ENCODE measurements at regions of chr11 and their contacts with region 1.

Region 1: DNA sequence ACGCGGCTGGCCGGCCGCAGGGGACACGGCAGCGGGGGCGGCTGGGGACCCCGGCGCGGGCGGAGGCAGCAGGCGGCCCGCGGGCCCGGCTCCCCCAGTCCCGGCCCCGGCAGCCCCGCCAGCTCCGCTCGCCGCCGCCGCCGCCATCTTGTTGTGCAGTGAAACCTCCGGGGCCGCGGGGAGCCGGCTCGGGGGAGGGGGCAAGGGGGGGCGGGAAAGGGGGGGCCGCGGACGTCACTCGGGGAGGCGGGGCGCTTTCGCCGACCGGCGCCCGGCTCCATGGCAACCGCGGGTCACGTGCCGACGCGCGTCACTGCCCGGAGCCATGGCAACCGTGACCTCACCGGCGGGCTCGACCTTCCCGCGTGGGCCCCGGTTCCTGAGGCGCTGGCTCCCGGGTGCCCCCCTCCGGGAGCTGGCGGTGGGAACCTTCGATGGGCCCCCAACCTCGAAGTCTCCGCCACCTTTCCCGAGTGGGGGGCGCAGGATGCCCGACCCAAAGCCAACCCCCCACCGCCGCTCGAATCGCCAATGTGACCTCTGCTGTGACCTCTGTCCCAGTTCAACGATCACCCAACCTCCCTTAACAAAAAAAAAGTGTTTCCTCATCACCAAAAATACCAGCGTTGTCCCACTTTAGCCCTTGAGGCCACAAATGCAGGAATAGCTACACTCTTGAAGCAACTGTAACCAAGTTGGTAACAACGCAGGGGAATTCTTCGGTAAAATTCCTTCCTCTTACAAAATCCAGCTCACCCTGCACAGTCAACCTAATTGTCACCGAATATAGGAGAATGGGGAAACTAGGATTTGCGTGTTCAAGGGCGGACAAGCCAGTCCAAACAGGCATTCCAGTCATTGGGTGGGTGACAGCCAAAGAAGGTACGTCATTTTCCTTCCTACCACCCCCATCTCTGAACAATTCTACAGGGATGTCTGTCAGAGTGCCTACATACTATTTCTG is at the start of gene SIK3:
- DNase-seq: peak; percentile 92 to 95 (median 94)
- H3K4me3 ChIP-seq: peak within 1 kb of the TSS; percentile 79 to 86
- H3K4me3 Mint-ChIP-seq: peak within 1 kb of the TSS; percentile 95 to 100 (median 97)
- H3K27ac ChIP-seq: peak within 1 kb of the TSS; percentile 98
- H3K27ac Mint-ChIP-seq: peak within 1 kb of the TSS; percentile 99 to 100 (median 99)
- H3K4me1 ChIP-seq: peaks cover 47% of the 10 kb centered on the region
- H3K4me1 Mint-ChIP-seq: peaks cover 34 to 66% (median 46%) of the 10 kb centered on the region in 4 donors
- H3K27me3 ChIP-seq: no peaks in the 10 kb centered on the region
- H3K27me3 Mint-ChIP-seq: peaks cover 0 to 2% of the 10 kb centered on the region in 2 donors
- total RNA-seq, gene SIK3: 88.4 to 97.5 TPM

Region 2: DNA sequence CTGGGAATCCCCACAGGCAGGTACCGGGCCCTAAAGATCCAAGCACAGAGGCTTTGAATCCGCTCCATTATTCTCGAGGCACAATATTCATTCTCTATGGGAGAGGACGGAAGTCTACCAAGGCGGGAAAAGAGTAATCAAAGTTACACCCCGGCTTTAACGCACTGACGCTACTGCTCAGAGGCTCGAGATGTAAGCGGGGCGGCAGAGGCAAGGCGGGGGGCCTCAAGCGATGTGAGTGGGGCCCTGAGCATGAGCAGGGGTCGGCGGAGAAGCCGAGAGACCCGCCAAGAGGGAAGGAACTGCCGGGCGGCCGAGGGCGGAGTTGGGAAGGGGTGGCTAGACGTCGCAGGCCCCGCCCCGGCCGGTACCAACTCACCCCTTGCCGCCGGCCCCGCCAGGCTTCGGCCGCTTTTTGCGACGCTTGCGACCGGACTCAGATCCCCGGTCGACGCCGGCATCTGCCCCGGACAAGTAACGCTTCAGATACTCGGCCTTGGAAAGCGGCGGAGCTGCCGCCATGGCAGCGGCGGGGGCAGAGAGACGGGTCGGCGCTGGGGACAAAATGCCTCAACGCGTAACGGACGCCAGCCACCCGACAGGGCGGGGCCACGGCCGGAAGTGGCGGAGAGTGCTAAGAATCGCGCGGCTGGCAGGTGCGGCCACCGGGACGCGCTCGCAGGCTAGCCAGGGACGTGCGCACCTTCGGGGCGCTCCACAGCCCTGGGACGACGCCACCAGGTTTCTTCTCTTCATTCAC is 325.9 kb before region 1 on chr11 and contains the start of gene BUD13:
- CTCF ChIA-PET with region 1: interaction called, 3 read pairs
- POLR2A ChIA-PET with region 1: interaction called, 6 read pairs
- intact Hi-C with region 1: loop called (anchors 5 kb)
- DNase-seq: peak; percentile 92 to 96 (median 93)
- H3K4me3 ChIP-seq: peak within 1 kb of the TSS; percentile 71 to 93
- H3K4me3 Mint-ChIP-seq: peak within 1 kb of the TSS; percentile 97 to 100 (median 98)
- H3K27ac ChIP-seq: peak within 1 kb of the TSS; percentile 94
- H3K27ac Mint-ChIP-seq: peak within 1 kb of the TSS; percentile 94 to 99 (median 98)
- H3K4me1 ChIP-seq: peaks cover 24% of the 10 kb centered on the region
- H3K4me1 Mint-ChIP-seq: peaks cover 24 to 47% (median 35%) of the 10 kb centered on the region in 4 donors
- H3K27me3 ChIP-seq: no peaks in the 10 kb centered on the region
- H3K27me3 Mint-ChIP-seq: no peaks in the 10 kb centered on the region
- total RNA-seq, gene BUD13: 19.9 to 23.1 TPM

Region 3: GRCh38 chr11:116835791-116836631 is 262.5 kb before region 1 on chr11:
- CTCF ChIA-PET with region 1: interaction called, 13 read pairs
- POLR2A ChIA-PET with region 1: interaction called, 4 read pairs
- intact Hi-C with region 1: loop called (anchors 1 kb)
- DNase-seq: peak; percentile 78 to 82 (median 80)
- H3K4me3 ChIP-seq: peak overlapping the region; percentile 36 to 60
- H3K4me3 Mint-ChIP-seq: peak overlapping the region; percentile 67 to 87 (median 78)
- H3K27ac ChIP-seq: no peak overlapping the region
- H3K27ac Mint-ChIP-seq: peak overlapping the region in 6 of 7 donors; percentile 29 to 76 (median 64)
- H3K4me1 ChIP-seq: peaks cover 15% of the 10 kb centered on the region
- H3K4me1 Mint-ChIP-seq: peaks cover 4 to 21% (median 9%) of the 10 kb centered on the region in 4 donors
- H3K27me3 ChIP-seq: no peaks in the 10 kb centered on the region
- H3K27me3 Mint-ChIP-seq: no peaks in the 10 kb centered on the region

Region 4: DNA sequence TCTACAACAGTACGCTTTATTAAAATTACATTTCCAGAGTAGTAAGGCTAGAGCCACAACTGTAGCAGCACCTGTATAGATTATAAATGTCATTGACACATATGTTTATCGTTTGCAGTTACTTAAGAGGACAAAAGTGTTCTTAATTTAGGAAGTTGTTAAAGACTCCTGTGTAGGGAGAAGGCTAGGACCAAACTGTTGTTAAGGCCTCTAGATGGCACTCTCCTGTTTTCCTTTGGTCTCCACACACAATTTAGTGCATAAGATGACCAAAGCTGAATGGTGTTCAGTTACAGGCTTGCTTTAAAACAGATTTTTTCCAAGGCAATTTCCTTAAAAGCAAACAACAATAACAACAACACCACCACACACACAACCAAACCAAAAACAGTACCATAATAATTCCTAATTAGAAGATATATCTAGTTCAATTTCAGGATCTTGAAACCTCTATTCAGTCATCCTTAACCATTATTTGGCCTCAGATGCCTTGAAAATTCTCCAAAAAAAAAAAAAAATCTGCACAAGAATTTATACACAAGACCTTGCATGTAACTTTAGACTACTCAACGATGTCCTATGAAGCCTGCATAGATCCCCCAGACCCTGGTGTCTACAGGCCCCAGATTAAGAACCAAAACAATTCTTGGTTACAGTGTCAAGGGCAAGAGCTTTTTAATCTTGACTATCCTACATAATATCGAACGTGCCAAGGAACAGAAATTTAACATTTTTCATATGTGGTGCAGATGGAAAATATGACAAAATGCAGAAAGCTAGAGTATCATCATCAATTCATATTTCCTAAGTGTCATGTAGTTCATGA is 218.5 kb before region 1 on chr11:
- CTCF ChIA-PET with region 1: interaction called, 155 read pairs
- POLR2A ChIA-PET with region 1: interaction called, 16 read pairs
- intact Hi-C with region 1: no loop called
- DNase-seq: peak; percentile 39 to 56 (median 50)
- H3K4me3 ChIP-seq: no peak overlapping the region
- H3K4me3 Mint-ChIP-seq: no peak overlapping the region
- H3K27ac ChIP-seq: no peak overlapping the region
- H3K27ac Mint-ChIP-seq: peak overlapping the region; percentile 35 to 79 (median 64)
- H3K4me1 ChIP-seq: no peaks in the 10 kb centered on the region
- H3K4me1 Mint-ChIP-seq: peaks cover 10 to 12% (median 11%) of the 10 kb centered on the region in 4 donors
- H3K27me3 ChIP-seq: no peaks in the 10 kb centered on the region
- H3K27me3 Mint-ChIP-seq: no peaks in the 10 kb centered on the region

Region 5: DNA sequence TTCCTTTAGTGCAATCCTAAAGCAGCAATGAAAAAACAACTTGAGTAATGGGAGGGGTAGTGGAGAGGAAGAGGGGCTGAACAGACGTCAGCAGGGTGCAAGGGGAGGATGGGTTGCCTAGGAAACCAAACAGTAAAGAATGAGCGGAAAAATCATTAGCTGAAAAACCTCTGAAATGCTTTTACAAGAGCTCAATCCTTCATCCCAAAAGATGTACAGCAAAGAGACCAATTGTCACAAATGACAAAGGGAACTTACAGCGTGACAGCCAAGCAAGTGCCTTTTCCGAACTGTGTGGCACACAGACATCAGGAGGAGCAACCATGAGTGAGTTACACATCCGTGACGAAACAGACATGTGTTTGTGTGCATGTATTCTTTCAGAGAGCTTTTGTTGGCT is 105.0 kb before region 1 on chr11:
- CTCF ChIA-PET with region 1: interaction called, 3 read pairs
- POLR2A ChIA-PET with region 1: no interaction called
- intact Hi-C with region 1: loop called (anchors 5 kb)
- DNase-seq: peak; percentile 40 to 74 (median 54)
- H3K4me3 ChIP-seq: no peak overlapping the region
- H3K4me3 Mint-ChIP-seq: peak overlapping the region in 7 of 8 donors; percentile 17 to 83 (median 52)
- H3K27ac ChIP-seq: no peak overlapping the region
- H3K27ac Mint-ChIP-seq: peak overlapping the region; percentile 87 to 96 (median 95)
- H3K4me1 ChIP-seq: peaks cover 47% of the 10 kb centered on the region
- H3K4me1 Mint-ChIP-seq: peaks cover 48 to 81% (median 64%) of the 10 kb centered on the region in 4 donors
- H3K27me3 ChIP-seq: no peaks in the 10 kb centered on the region
- H3K27me3 Mint-ChIP-seq: no peaks in the 10 kb centered on the region

Region 6: DNA sequence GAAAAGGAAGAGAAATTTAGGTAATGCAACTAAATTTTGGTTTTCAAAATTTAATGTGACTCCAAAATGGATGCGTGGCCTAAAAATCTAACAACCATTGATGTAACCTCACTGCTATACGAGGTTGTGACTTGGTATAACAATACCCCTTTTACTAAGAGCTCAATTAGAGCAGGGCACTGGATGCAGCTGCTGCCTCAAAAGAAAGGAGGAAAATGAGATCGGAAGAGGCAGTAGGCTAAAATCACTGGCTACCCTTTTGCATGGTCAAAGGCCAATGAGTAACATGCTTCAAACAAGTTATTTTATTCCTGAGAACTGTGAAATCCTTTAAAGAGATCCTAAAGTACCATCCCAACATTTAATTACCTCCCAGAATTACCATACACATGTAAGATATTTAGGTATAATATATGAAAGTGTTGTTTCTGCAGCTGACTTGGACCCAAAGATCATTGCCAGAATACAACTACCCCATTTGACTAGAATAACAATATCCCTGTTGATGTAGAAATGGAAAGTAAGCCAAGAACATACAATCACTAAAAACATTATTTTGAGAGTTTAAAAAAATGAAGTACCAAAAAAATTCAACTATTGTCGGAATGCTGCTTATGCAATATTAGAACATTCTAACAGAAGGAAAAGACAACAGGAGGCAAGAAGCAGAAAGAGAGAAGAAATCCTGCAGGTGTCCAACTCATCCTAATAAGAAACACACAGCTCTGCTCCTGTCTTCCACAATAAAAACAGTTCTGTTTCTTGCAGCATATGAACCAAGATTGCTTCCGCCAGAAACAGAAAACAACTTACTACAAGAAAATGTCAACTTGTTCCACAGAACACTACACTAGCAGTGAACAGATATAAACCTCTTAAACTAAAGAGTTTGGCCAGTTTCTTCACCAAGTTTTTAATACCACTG is 15.3 kb before region 1 on chr11:
- CTCF ChIA-PET with region 1: interaction called, 6 read pairs
- POLR2A ChIA-PET with region 1: interaction called, 5 read pairs
- intact Hi-C with region 1: loop called (anchors 2 kb)
- DNase-seq: no peak
- H3K4me3 ChIP-seq: no peak overlapping the region
- H3K4me3 Mint-ChIP-seq: peak overlapping the region in 5 of 8 donors; percentile 9 to 63 (median 45)
- H3K27ac ChIP-seq: no peak overlapping the region
- H3K27ac Mint-ChIP-seq: peak overlapping the region in 2 of 7 donors; percentile 2 to 82
- H3K4me1 ChIP-seq: peaks cover 46% of the 10 kb centered on the region
- H3K4me1 Mint-ChIP-seq: peaks cover 46 to 80% (median 61%) of the 10 kb centered on the region in 4 donors
- H3K27me3 ChIP-seq: no peaks in the 10 kb centered on the region
- H3K27me3 Mint-ChIP-seq: no peaks in the 10 kb centered on the region

Region 7: DNA sequence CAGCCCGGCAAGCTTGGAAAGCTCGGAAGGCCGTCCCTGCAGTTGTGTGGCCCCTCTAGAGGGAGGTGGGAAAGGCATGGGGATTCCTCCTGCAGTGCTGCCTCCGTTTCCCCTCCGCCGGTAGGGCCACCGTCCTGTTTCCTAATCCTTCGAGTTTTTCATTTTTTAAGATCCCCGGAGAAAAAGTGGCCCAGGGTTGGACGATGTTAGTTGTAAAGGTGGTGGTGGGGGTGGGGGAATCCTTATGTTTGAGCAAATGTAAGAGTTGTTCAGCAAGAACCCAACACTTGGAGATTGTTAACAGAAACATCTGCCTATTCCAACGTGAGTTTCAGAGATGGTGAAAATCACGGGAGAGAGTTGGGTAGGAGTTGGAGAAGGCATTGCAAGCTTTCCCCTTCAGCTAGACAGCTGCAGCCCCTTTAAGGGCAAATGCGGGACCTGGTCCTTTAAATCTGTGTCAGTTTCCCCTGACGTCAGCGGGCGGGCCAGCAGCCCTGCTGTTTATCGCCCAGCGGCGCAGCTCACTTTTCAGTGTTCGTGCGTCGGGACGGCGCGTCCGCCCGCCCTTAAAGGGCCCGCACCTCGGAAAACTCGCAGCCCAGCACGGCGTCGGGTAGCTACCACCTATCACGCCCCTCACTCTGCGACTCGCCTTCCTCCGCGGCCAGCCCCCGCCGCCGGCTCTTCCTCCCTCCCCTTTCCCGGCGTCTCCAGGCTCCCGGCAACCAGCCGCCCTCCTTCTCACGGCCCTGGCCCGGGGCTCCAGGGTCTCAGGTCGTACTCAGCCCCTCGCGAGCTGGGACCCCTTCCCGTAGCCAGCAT is 79.9 kb after region 1 on chr11 and contains the start of gene SIDT2:
- CTCF ChIA-PET with region 1: interaction called, 4 read pairs
- POLR2A ChIA-PET with region 1: interaction called, 5 read pairs
- intact Hi-C with region 1: loop called (anchors 1 kb)
- DNase-seq: peak; percentile 85 to 90 (median 86)
- H3K4me3 ChIP-seq: peak within 1 kb of the TSS; percentile 76 to 80
- H3K4me3 Mint-ChIP-seq: peak within 1 kb of the TSS; percentile 94 to 99 (median 94)
- H3K27ac ChIP-seq: peak within 1 kb of the TSS; percentile 73
- H3K27ac Mint-ChIP-seq: peak within 1 kb of the TSS; percentile 93 to 98 (median 97)
- H3K4me1 ChIP-seq: peaks cover 30% of the 10 kb centered on the region
- H3K4me1 Mint-ChIP-seq: peaks cover 21 to 45% (median 34%) of the 10 kb centered on the region in 4 donors
- H3K27me3 ChIP-seq: no peaks in the 10 kb centered on the region
- H3K27me3 Mint-ChIP-seq: no peaks in the 10 kb centered on the region
- total RNA-seq, gene SIDT2: 60.2 to 67.3 TPM

Measured in CD4-positive, alpha-beta memory T cell (primary cell).